AG04450 (cell line): ENCODE measurements at regions of chr2 and their contacts with region 1.

Region 1: GRCh38 chr2:135563793-135564192 is 32.5 kb downstream of the R3HDM1 start:
- DNase-seq: no peak
- H3K4me3 ChIP-seq: no peak overlapping the region
- H3K27ac ChIP-seq: no peak overlapping the region
- H3K27me3 ChIP-seq: no peaks in the 10 kb centered on the region
- CTCF ChIP-seq: no peak

Region 2: GRCh38 chr2:135732561-135732960 is 168.8 kb after region 1 on chr2:
- CTCF ChIA-PET with region 1: no interaction called
- POLR2A ChIA-PET with region 1: interaction called, 11 read pairs
- DNase-seq: no peak
- H3K4me3 ChIP-seq: no peak overlapping the region
- H3K27ac ChIP-seq: no peak overlapping the region
- H3K27me3 ChIP-seq: no peaks in the 10 kb centered on the region
- CTCF ChIP-seq: no peak